Activated CD4-positive, alpha-beta T cell treated with anti-CD3 and anti-CD28 coated beads, Interleukin-2, amount 10 ng/mL, durations not matched to agents 24 days and 14 days (primary cell): ENCODE measurements at regions of chr1 and their contacts with region 1.

Region 1: GRCh38 chr1:15417365-15417934 is 7.8 kb downstream of the EFHD2 start:
- DNase-seq: peak; percentile 87
- H3K4me3 Mint-ChIP-seq: peak overlapping the region; percentile 70
- H3K27ac Mint-ChIP-seq: peak overlapping the region; percentile 73
- H3K4me1 Mint-ChIP-seq: peaks cover 60% of the 10 kb centered on the region
- H3K27me3 Mint-ChIP-seq: no peaks in the 10 kb centered on the region

Region 2: DNA sequence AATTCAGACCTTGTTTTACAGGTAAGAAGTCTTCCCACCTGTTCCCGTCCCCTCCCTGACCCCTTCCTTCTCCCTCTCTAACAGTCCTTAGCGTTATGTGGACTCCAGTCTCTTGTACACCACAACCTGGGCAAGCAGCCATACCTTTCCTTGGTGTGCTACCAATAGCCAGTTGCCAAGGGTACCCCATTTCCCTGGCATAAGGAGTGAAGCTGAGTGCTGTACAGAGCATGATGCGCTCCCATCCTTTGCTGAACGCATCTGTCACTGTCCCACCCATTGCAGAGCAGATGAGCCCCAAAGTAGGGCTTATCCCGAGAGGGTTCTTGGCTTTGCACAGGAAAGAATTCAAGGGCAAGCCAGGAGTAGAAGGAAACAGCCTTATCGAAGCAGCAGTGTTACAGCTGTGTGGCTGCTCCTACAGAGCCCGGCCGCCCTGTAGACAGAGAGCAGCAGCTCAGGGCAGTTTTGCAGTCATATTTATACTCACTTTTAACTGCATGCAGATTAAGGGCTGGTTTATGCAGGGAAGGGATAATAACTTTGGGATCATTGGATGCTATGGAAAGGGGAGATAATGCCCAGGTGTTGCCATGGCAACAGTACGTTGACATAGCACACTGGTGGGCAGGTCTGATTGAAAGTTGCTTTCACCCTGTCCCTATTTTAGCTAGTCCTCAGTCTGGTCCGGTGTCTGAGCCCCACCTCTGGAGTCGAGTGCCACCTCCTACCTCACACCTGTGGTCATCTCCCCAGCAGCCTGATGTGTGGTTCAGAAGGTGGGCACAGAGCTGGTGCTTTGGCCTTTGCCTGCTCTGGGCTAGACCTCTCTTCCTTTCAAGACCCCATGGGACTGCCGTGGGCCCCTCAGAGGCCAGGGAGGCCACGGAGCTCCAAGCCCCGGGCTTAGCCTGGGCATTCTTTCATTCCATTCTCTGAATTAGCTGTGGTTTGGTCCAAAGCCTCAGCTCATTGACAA is 165.3 kb before region 1 on chr1:
- intact Hi-C with region 1: loop called (anchors 5 kb)
- DNase-seq: no peak
- H3K4me3 Mint-ChIP-seq: peak overlapping the region; percentile 39
- H3K27ac Mint-ChIP-seq: peak overlapping the region; percentile 15
- H3K4me1 Mint-ChIP-seq: peaks cover 47% of the 10 kb centered on the region
- H3K27me3 Mint-ChIP-seq: peaks cover 47% of the 10 kb centered on the region

Region 3: GRCh38 chr1:15345711-15346355 is 71.6 kb before region 1 on chr1:
- intact Hi-C with region 1: loop called (anchors 2 kb)
- DNase-seq: peak; percentile 90
- H3K4me3 Mint-ChIP-seq: peak overlapping the region; percentile 60
- H3K27ac Mint-ChIP-seq: peak overlapping the region; percentile 79
- H3K4me1 Mint-ChIP-seq: peaks cover 69% of the 10 kb centered on the region
- H3K27me3 Mint-ChIP-seq: peaks cover 8% of the 10 kb centered on the region

Region 4: DNA sequence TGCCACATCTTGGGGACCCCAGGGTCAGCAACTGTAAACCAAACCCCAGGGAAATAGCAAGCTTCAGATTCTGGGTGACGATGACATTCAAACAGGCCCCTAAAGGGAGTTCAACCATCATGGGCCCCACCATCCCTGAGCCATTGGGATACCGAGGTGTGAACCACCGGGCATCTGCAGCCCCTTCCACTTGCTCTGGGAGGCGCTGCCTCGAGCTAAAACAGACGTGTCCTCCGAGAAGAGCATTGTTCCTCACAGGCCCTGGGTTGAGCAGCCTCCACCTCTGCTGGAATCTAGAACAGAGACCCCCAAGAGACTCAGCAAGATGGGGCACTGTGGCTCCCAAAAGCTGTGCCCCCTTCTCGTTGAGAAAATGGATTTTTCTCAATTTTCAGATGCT is 26.8 kb before region 1 on chr1:
- intact Hi-C with region 1: no loop called
- DNase-seq: no peak
- H3K4me3 Mint-ChIP-seq: no peak overlapping the region
- H3K27ac Mint-ChIP-seq: no peak overlapping the region
- H3K4me1 Mint-ChIP-seq: peaks cover 4% of the 10 kb centered on the region
- H3K27me3 Mint-ChIP-seq: peaks cover 28% of the 10 kb centered on the region

Region 5: DNA sequence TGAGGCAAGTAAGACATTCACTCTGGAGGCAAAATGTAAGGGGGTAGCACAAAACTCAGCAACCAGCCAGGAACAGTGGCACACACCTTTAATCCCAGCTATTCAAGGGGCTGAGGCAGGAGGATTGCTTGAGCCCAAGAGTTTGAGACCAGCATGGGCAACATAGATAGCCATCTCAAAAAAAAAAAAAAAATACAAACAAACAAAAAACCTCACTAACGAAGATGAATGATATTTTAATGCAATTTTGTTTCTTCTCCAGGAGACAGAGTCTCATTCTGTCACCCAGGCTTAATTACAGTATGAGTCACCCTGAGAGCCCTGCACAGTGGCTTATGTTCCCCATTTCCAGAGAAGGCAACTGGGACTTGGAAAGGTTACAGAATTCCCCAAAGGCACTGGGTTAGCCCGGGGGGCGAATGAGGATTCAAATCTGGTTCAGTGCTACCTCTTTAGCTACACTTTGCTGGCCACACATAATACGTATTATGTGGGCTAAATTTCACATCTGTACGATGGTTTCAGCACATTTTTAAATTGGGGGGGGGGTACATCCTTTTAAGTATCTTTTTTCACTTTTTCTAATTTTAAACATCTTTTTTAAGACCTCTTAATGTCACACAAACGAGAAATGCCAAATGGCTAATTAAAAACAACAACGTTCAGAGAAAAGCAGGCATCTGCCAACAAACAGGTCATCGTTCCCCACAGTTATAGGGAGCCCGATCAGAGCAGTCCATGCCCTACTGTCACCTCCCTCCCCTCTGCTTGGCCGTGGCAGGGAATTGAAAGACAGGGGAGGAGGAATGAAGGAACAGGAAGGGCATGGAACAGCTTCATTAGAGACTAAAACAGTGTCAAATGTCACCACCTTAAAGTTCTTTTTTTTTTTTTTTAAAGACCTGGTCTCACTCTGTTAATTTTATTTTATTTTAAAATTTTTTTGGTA is 42.6 kb after region 1 on chr1:
- intact Hi-C with region 1: no loop called
- DNase-seq: no peak
- H3K4me3 Mint-ChIP-seq: no peak overlapping the region
- H3K27ac Mint-ChIP-seq: no peak overlapping the region
- H3K4me1 Mint-ChIP-seq: no peaks in the 10 kb centered on the region
- H3K27me3 Mint-ChIP-seq: peaks cover 5% of the 10 kb centered on the region